Mammary epithelial cell (primary cell): ENCODE measurements at regions of chr22 and their contacts with region 1.

Region 1: GRCh38 chr22:26835929-26836528 is 178.6 kb downstream of the MIAT start:
- DNase-seq: peak; percentile 22
- H3K4me3 ChIP-seq: no peak overlapping the region
- H3K27ac ChIP-seq: no peak overlapping the region
- H3K4me1 ChIP-seq: no peaks in the 10 kb centered on the region
- H3K27me3 ChIP-seq: no peaks in the 10 kb centered on the region
- CTCF ChIP-seq: peak; percentile 73 to 76

Region 2: DNA sequence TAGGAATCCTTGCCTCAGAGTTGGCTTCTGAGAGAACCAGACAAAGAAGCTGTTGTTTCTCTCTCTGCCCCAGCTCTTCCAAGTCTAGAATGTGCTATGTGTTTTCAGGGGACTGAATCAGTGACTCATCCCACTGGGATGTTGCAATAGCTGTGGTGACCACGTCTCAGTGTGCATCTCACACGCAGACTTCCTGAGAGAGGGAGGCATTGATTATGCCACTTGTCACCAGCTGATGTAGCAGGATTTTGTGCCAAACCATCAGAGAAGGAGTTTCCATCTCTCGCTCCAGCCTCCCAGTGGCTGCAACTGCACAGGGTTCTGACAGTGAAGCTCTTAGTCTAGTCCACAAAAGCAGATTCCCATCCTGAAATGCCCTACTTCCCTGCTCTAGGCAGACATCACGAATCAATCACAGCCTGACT is 277.2 kb after region 1 on chr22:
- CTCF ChIA-PET with region 1: interaction called, 11 read pairs
- dilution Hi-C with region 1: no loop called
- in situ Hi-C with region 1: no loop called
- intact Hi-C with region 1: loop called (anchors 10 kb)
- DNase-seq: peak; percentile 95
- H3K4me3 ChIP-seq: no peak overlapping the region
- H3K27ac ChIP-seq: no peak overlapping the region
- H3K4me1 ChIP-seq: no peaks in the 10 kb centered on the region
- H3K27me3 ChIP-seq: peaks cover 16% of the 10 kb centered on the region
- CTCF ChIP-seq: no peak

Region 3: GRCh38 chr22:27331526-27332281 is 495.7 kb after region 1 on chr22:
- CTCF ChIA-PET with region 1: no interaction called
- dilution Hi-C with region 1: no loop called
- in situ Hi-C with region 1: no loop called
- intact Hi-C with region 1: loop called (anchors 1 kb)
- DNase-seq: no peak
- H3K4me3 ChIP-seq: no peak overlapping the region
- H3K27ac ChIP-seq: no peak overlapping the region
- H3K4me1 ChIP-seq: peaks cover 6% of the 10 kb centered on the region
- H3K27me3 ChIP-seq: no peaks in the 10 kb centered on the region
- CTCF ChIP-seq: peak; percentile 41 to 43

Region 4: DNA sequence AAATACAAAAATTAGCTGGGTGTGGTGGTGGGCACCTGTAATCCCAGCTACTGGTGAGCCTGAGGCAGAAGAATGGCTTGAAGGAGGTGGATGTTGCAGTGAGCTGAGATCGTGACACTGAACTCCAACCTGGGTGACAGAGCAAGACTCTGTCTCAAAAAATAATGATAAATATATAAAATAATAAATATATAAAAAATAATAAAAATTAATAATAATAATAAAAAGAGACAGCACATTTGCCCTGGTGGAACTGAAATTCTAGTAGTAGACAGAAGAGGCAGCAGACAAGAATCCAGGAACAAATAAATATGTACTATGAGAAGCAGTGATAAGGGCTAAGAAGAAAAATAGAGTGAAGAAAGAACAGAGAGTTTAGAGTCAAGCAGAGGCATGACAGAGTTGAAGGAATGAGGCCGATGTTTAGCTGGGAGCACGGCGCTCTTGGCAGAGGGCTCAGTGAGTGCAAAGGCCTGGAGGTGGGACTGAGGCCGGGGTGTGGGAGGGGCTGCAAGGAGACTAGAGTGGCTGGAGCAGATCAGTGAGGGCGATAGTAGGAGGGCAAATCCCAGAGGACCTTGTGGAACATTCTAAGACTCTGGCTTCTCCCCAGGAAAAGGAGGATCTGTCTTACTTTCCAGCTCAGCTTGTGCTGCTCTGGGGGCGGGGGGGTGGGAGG is 555.2 kb after region 1 on chr22:
- CTCF ChIA-PET with region 1: no interaction called
- dilution Hi-C with region 1: no loop called
- in situ Hi-C with region 1: no loop called
- intact Hi-C with region 1: loop called (anchors 10 kb)
- DNase-seq: no peak
- H3K4me3 ChIP-seq: no peak overlapping the region
- H3K27ac ChIP-seq: no peak overlapping the region
- H3K4me1 ChIP-seq: peaks cover 5% of the 10 kb centered on the region
- H3K27me3 ChIP-seq: no peaks in the 10 kb centered on the region
- CTCF ChIP-seq: no peak

Region 5: GRCh38 chr22:27617214-27617881 is 781.3 kb after region 1 on chr22:
- CTCF ChIA-PET with region 1: no interaction called
- dilution Hi-C with region 1: no loop called
- in situ Hi-C with region 1: no loop called
- intact Hi-C with region 1: loop called (anchors 5 kb)
- DNase-seq: no peak
- H3K4me3 ChIP-seq: no peak overlapping the region
- H3K27ac ChIP-seq: no peak overlapping the region
- H3K4me1 ChIP-seq: peaks cover 7% of the 10 kb centered on the region
- H3K27me3 ChIP-seq: no peaks in the 10 kb centered on the region
- CTCF ChIP-seq: peak; percentile 25 to 35

Region 6: GRCh38 chr22:28009272-28009827 is 1173.3 kb after region 1 on chr22:
- CTCF ChIA-PET with region 1: no interaction called
- dilution Hi-C with region 1: no loop called
- in situ Hi-C with region 1: no loop called
- intact Hi-C with region 1: loop called (anchors 5 kb)
- DNase-seq: peak; percentile 54
- H3K4me3 ChIP-seq: no peak overlapping the region
- H3K27ac ChIP-seq: no peak overlapping the region
- H3K4me1 ChIP-seq: peaks cover 3% of the 10 kb centered on the region
- H3K27me3 ChIP-seq: no peaks in the 10 kb centered on the region
- CTCF ChIP-seq: peak; percentile 93 to 98